ENCODE measurements at regions of chr1 and their contacts with region 1.

Region 1: GRCh38 chr1:77031106-77031662 is 163.9 kb downstream of the ST6GALNAC5 start:
- DNase-seq: peak; percentile 73
- ATAC-seq: peak; percentile 85
- H3K4me3 ChIP-seq: no peak overlapping the region
- H3K27ac ChIP-seq: no peak overlapping the region
- H3K4me1 ChIP-seq: no peaks in the 10 kb centered on the region
- H3K27me3 ChIP-seq: peaks cover 25% of the 10 kb centered on the region
- CTCF ChIP-seq: 0 out of 2 replicates have a peak, but pooled peaks have one; percentile 6
- POLR2A ChIP-seq: no peak
- RAD21 ChIP-seq: no peak

Region 2: DNA sequence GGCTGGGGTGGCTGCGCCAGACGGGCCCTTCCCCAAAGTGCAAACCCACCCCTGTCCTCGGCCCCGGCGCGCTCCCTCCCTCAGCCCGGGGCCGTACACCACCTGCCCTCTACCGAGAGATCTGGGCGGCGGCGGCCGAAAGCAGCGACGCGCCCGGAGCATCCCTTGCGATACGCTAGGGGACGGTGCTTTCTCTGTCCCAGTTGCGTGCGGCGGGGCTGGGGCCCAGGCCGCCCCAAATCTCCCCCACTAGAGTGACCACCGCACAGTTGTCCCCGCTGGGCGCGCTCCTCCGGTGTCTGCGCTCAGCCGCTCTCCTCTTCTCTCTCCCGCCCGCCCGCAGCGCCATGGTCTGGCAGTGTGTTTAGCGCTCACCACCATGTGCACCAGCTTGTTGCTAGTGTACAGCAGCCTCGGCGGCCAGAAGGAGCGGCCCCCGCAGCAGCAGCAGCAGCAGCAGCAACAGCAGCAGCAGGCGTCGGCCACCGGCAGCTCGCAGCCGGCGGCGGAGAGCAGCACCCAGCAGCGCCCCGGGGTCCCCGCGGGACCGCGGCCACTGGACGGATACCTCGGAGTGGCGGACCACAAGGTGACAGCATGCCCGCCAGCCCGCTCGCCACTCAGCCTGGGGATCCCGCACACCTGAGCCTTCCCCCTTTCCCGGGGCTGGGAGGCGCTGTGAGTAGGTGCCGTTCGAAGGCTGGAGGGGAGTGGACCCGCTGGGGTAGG is 162.9 kb before region 1 on chr1:
- CTCF ChIA-PET with region 1: no interaction called
- POLR2A ChIA-PET with region 1: no interaction called
- dilution Hi-C with region 1: no loop called
- in situ Hi-C with region 1: no loop called
- intact Hi-C with region 1: loop called (anchors 10 kb)
- DNase-seq: peak; percentile 29
- ATAC-seq: peak; percentile 81
- H3K4me3 ChIP-seq: peak overlapping the region; percentile 57
- H3K27ac ChIP-seq: no peak overlapping the region
- H3K4me1 ChIP-seq: 0 out of 2 replicates have a peak, but pooled peaks cover 2% of the 10 kb centered on the region
- H3K27me3 ChIP-seq: peaks cover 26% of the 10 kb centered on the region
- CTCF ChIP-seq: no peak; the same call in 1 of the 2 replicates
- POLR2A ChIP-seq: no peak
- RAD21 ChIP-seq: no peak

Region 3: DNA sequence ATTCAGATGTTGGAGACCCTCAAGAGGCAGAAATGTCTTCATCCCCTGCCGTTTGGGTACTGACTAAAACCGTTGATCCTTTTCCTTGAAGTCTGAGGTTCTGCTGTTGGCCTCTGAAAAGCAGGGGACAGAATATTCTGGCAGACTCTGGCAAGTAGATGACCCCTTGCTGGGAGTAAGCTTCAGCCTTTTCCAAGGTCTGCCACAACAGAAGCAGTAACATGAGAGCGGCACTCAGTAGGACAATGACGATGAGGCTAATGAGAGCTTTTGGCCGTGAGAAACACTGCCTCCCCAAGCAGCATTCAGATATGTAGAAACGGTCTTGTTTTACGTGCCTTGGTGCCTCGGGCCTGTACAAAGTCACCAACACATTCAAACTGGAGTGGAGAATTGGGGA is 20.2 kb before region 1 on chr1:
- CTCF ChIA-PET with region 1: no interaction called
- POLR2A ChIA-PET with region 1: no interaction called
- dilution Hi-C with region 1: no loop called
- in situ Hi-C with region 1: no loop called
- intact Hi-C with region 1: no loop called
- DNase-seq: no peak
- ATAC-seq: no peak
- H3K4me3 ChIP-seq: no peak overlapping the region
- H3K27ac ChIP-seq: no peak overlapping the region
- H3K4me1 ChIP-seq: no peaks in the 10 kb centered on the region
- H3K27me3 ChIP-seq: peaks cover 11% of the 10 kb centered on the region
- CTCF ChIP-seq: no peak
- POLR2A ChIP-seq: no peak
- RAD21 ChIP-seq: no peak

Region 4: GRCh38 chr1:77076759-77077158 is 45.6 kb after region 1 on chr1:
- CTCF ChIA-PET with region 1: no interaction called
- POLR2A ChIA-PET with region 1: no interaction called
- dilution Hi-C with region 1: no loop called
- in situ Hi-C with region 1: no loop called
- intact Hi-C with region 1: no loop called
- DNase-seq: no peak
- ATAC-seq: no peak
- H3K4me3 ChIP-seq: no peak overlapping the region
- H3K27ac ChIP-seq: no peak overlapping the region
- H3K4me1 ChIP-seq: no peaks in the 10 kb centered on the region
- H3K27me3 ChIP-seq: no peaks in the 10 kb centered on the region; the same call in 1 of the 2 replicates
- CTCF ChIP-seq: no peak
- POLR2A ChIP-seq: no peak
- RAD21 ChIP-seq: no peak